GM18951 (cell line): ENCODE measurements at regions of chr14 and their contacts with region 1.

Region 1: GRCh38 chr14:49633640-49634546 is 1.2 kb downstream of the DNAAF2 start:
- POLR2A ChIP-seq: peak; percentile 96

Region 2: GRCh38 chr14:49767562-49768300 is 133.8 kb after region 1 on chr14 and contains the start of gene KLHDC2:
- in situ Hi-C with region 1: no loop called
- POLR2A ChIP-seq: peak; percentile 75

Region 3: GRCh38 chr14:50116181-50116956 is 482.5 kb after region 1 on chr14 and contains the start of gene VCPKMT:
- in situ Hi-C with region 1: loop called (anchors 25 kb)
- POLR2A ChIP-seq: peak; percentile 96